ENCODE measurements at regions of chr6 and their contacts with region 1.

Region 1: DNA sequence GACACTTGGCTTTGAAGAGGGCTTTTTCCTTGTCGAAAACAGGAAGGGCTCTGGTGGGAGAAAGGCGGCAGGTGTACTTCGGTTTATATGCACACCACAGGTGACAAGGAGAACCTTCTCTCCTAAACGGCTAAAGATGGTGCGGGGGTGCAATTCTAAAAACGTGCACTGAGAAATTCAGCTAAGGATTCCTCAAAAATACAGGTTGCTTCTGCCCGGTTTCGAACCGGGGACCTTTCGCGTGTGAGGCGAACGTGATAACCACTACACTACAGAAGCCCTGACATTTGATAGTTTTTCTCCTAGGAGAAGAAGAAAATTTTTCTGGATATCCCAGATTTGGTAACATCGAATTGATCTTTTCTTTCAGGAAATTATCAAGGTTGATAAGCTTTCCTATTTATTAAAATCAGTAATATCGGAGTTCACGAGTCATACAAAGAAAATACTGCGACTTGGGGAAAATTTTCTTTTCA is 32.0 kb downstream of the POM121L2 start:
- DNase-seq: no peak
- H3K4me3 ChIP-seq: no peak overlapping the region
- H3K4me3 Mint-ChIP-seq: peak overlapping the region in 4 of 8 donors; percentile 13 to 54 (median 30)
- H3K27ac ChIP-seq: no peak overlapping the region
- H3K27ac Mint-ChIP-seq: peak overlapping the region in 3 of 7 donors; percentile 66 to 87 (median 82)
- H3K4me1 ChIP-seq: peaks cover 5% of the 10 kb centered on the region
- H3K4me1 Mint-ChIP-seq: peaks cover 4 to 6% (median 4%) of the 10 kb centered on the region in 4 donors
- H3K27me3 ChIP-seq: peaks cover 64% of the 10 kb centered on the region
- H3K27me3 Mint-ChIP-seq: peaks cover 60 to 63% of the 10 kb centered on the region in 2 donors

Region 2: GRCh38 chr6:27237089-27237803 is 42.9 kb before region 1 on chr6:
- CTCF ChIA-PET with region 1: no interaction called
- POLR2A ChIA-PET with region 1: no interaction called
- intact Hi-C with region 1: loop called (anchors 10 kb)
- DNase-seq: peak in 4 of 5 donors; percentile 19 to 46 (median 36)
- H3K4me3 ChIP-seq: no peak overlapping the region
- H3K4me3 Mint-ChIP-seq: peak overlapping the region in 6 of 8 donors; percentile 7 to 71 (median 30)
- H3K27ac ChIP-seq: no peak overlapping the region
- H3K27ac Mint-ChIP-seq: peak overlapping the region in 5 of 7 donors; percentile 22 to 90 (median 87)
- H3K4me1 ChIP-seq: no peaks in the 10 kb centered on the region
- H3K4me1 Mint-ChIP-seq: peaks cover 7 to 29% (median 16%) of the 10 kb centered on the region in 4 donors
- H3K27me3 ChIP-seq: peaks cover 37% of the 10 kb centered on the region
- H3K27me3 Mint-ChIP-seq: peaks cover 61% of the 10 kb centered on the region in 2 donors

Region 3: DNA sequence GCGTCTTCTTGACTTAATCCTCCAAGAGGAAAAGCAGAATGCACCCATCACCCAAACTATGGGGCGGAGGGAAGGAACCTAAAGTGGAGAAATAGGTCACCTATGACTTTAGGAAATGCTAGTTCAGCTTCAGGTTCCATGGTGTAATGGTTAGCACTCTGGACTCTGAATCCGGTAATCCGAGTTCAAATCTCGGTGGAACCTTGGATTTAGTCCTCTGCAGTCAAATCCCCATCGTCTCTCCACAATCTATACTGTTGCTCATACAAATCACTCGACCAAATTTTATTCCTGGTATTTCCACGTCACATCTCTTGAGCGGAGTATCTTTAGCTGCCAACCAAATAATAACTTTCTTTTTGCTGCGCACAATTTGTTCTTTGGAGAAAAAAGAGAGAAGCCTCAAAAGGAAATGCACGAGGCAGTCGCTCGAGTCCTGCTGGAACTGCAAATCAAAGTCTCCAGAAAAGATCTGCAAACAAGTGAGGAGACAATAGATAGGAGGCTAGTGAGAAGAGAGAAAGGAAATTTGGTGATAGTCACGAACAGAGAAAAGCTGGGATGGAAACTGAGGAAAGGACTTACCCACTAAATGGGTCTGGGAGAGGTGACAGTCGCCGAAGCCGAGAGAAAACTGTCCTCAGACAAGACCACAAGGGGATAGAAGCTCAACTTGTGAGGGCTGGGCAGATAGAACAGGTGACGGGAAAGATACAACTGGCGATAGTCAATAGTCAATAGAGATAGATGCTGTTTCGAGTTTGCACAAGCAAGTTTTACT is 15.4 kb after region 1 on chr6:
- CTCF ChIA-PET with region 1: no interaction called
- POLR2A ChIA-PET with region 1: interaction called, 3 read pairs
- intact Hi-C with region 1: loop called (anchors 2 kb)
- DNase-seq: no peak
- H3K4me3 ChIP-seq: no peak overlapping the region
- H3K4me3 Mint-ChIP-seq: peak overlapping the region in 5 of 8 donors; percentile 27 to 73 (median 43)
- H3K27ac ChIP-seq: no peak overlapping the region
- H3K27ac Mint-ChIP-seq: peak overlapping the region in 5 of 7 donors; percentile 57 to 93 (median 81)
- H3K4me1 ChIP-seq: no peaks in the 10 kb centered on the region
- H3K4me1 Mint-ChIP-seq: peaks cover 0 to 3% (median 0%) of the 10 kb centered on the region in 4 donors
- H3K27me3 ChIP-seq: peaks cover 61% of the 10 kb centered on the region
- H3K27me3 Mint-ChIP-seq: peaks cover 73% of the 10 kb centered on the region in 2 donors

Region 4: GRCh38 chr6:27332692-27333641 is 52.9 kb after region 1 on chr6:
- CTCF ChIA-PET with region 1: no interaction called
- POLR2A ChIA-PET with region 1: no interaction called
- intact Hi-C with region 1: no loop called
- DNase-seq: peak; percentile 44 to 59 (median 49)
- H3K4me3 ChIP-seq: peak overlapping the region in 1 of 2 donors; percentile 80
- H3K4me3 Mint-ChIP-seq: peak overlapping the region; percentile 80 to 91 (median 85)
- H3K27ac ChIP-seq: no peak overlapping the region
- H3K27ac Mint-ChIP-seq: peak overlapping the region; percentile 10 to 93 (median 53)
- H3K4me1 ChIP-seq: peaks cover 5% of the 10 kb centered on the region
- H3K4me1 Mint-ChIP-seq: peaks cover 4 to 12% (median 9%) of the 10 kb centered on the region in 4 donors
- H3K27me3 ChIP-seq: peaks cover 13% of the 10 kb centered on the region
- H3K27me3 Mint-ChIP-seq: peaks cover 26 to 38% of the 10 kb centered on the region in 2 donors

Region 5: DNA sequence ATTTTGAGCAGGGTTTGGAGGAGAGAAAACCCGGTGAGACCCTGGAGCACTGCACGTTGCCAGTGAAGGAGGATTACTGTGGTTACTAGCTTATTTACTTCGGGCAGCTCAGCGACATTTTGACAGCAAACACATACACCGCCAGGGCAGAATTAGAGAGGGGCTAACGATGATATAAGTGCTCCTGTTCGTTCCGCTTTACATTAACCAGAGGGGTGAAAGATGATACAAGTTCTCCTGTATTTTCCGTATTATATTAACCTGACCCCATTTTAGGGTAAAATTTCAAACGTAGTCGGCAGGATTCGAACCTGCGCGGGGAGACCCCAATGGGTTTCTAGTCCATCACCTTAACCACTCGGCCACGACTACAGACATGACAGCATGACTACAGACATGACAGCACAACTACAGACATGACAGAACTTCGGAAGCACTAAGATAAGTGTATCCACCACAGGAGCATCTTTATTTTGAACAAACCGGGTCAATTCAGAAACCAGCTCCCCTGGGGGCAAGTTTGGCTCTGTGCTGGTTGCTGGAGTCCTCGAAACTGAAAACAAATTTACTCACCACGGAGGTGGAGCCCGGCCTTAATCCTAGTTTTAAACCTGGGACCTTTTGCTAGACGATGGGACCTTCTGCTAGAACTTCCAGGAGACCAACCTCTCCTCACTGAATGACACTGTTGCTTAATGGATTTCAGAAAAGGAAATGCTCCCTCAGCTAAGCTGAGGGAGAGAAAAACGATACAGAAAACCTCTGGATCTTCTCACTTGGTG is 273.2 kb after region 1 on chr6:
- CTCF ChIA-PET with region 1: no interaction called
- POLR2A ChIA-PET with region 1: no interaction called
- intact Hi-C with region 1: loop called (anchors 10 kb)
- DNase-seq: no peak
- H3K4me3 ChIP-seq: no peak overlapping the region
- H3K4me3 Mint-ChIP-seq: peak overlapping the region in 3 of 8 donors; percentile 2 to 20 (median 5)
- H3K27ac ChIP-seq: no peak overlapping the region
- H3K27ac Mint-ChIP-seq: peak overlapping the region in 2 of 7 donors; percentile 35 to 53
- H3K4me1 ChIP-seq: no peaks in the 10 kb centered on the region
- H3K4me1 Mint-ChIP-seq: peaks cover 3 to 16% (median 6%) of the 10 kb centered on the region in 4 donors
- H3K27me3 ChIP-seq: peaks cover 46% of the 10 kb centered on the region
- H3K27me3 Mint-ChIP-seq: peaks cover 59 to 61% of the 10 kb centered on the region in 2 donors

Measured in CD4-positive, alpha-beta memory T cell (primary cell).